IMR-90 (cell line): ENCODE measurements at regions of chr14 and their contacts with region 1.

Region 1: DNA sequence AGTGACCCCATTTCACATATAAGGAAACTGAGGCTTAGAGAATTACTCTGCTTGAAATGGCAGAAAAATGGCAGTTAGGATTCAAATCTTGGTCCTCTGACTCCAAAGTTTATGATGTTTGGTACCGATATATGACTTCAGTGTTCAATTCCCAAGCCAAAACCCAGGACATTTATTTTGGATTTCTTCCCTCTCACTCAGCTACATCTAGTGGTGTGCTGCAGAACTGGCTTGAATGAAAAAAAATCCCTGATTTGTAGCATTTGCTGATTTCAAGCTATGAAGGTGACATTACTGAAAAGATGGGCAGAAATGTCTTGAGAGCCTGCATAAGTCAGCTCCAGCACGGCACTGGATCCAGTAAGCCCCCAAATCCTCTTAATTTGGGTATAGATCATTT is 106.4 kb downstream of the EFCAB11 start:
- DNase-seq: peak; percentile 71
- ATAC-seq: 0 out of 2 replicates have a peak, but pooled peaks have one; percentile 3
- H3K4me3 ChIP-seq: no peak overlapping the region
- H3K27ac ChIP-seq: no peak overlapping the region
- H3K4me1 ChIP-seq: peaks cover 16% of the 10 kb centered on the region
- H3K27me3 ChIP-seq: no peaks in the 10 kb centered on the region
- CTCF ChIP-seq: peak; percentile 70
- POLR2A ChIP-seq: no peak
- RAD21 ChIP-seq: peak; percentile 85

Region 2: GRCh38 chr14:89540830-89541470 is 307.2 kb before region 1 on chr14:
- CTCF ChIA-PET with region 1: no interaction called
- POLR2A ChIA-PET with region 1: no interaction called
- dilution Hi-C with region 1: no loop called
- in situ Hi-C with region 1: no loop called
- intact Hi-C with region 1: loop called (anchors 5 kb)
- DNase-seq: peak; percentile 95
- ATAC-seq: peak; percentile 86
- H3K4me3 ChIP-seq: peak overlapping the region; percentile 16; the same call in 1 of the 2 replicates
- H3K27ac ChIP-seq: peak overlapping the region; percentile 89
- H3K4me1 ChIP-seq: peaks cover 13% of the 10 kb centered on the region
- H3K27me3 ChIP-seq: no peaks in the 10 kb centered on the region
- CTCF ChIP-seq: no peak
- POLR2A ChIP-seq: no peak
- RAD21 ChIP-seq: no peak; the same call in 1 of the 2 replicates

Region 3: GRCh38 chr14:89701211-89702043 is 146.7 kb before region 1 on chr14:
- CTCF ChIA-PET with region 1: no interaction called
- POLR2A ChIA-PET with region 1: no interaction called
- dilution Hi-C with region 1: no loop called
- in situ Hi-C with region 1: no loop called
- intact Hi-C with region 1: loop called (anchors 5 kb)
- DNase-seq: peak; percentile 62
- ATAC-seq: peak; percentile 94
- H3K4me3 ChIP-seq: peak overlapping the region; percentile 69
- H3K27ac ChIP-seq: peak overlapping the region; percentile 68
- H3K4me1 ChIP-seq: peaks cover 5% of the 10 kb centered on the region
- H3K27me3 ChIP-seq: no peaks in the 10 kb centered on the region
- CTCF ChIP-seq: no peak
- POLR2A ChIP-seq: no peak
- RAD21 ChIP-seq: peak; percentile 9; the same call in 1 of the 2 replicates

Region 4: DNA sequence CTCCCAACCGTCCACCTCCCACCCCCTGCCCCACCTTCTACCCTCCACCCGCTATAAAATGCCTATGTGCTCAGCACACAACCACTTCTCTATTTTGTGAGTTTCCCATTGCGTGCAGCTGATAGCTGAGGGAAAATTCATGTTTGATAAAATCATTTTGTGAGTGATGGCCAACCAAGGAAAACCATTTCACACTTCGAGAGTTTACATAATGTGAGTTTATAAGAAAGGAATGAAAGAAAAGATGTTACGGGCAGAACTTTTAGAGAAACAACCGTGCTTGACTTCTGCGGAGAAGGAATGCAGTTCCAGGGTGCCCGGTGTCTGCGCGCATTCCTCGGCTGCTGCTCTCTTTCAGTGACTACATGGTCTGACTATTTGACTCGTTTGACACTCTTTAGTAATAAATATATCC is 34.5 kb before region 1 on chr14:
- CTCF ChIA-PET with region 1: no interaction called
- POLR2A ChIA-PET with region 1: interaction called, 5 read pairs
- dilution Hi-C with region 1: no loop called
- in situ Hi-C with region 1: no loop called
- intact Hi-C with region 1: loop called (anchors 2 kb)
- DNase-seq: peak; percentile 96
- ATAC-seq: peak; percentile 96
- H3K4me3 ChIP-seq: no peak overlapping the region
- H3K27ac ChIP-seq: peak overlapping the region; percentile 34; the same call in 1 of the 2 replicates
- H3K4me1 ChIP-seq: peaks cover 8% of the 10 kb centered on the region
- H3K27me3 ChIP-seq: no peaks in the 10 kb centered on the region
- CTCF ChIP-seq: no peak
- POLR2A ChIP-seq: no peak
- RAD21 ChIP-seq: no peak; the same call in 1 of the 2 replicates

Region 5: DNA sequence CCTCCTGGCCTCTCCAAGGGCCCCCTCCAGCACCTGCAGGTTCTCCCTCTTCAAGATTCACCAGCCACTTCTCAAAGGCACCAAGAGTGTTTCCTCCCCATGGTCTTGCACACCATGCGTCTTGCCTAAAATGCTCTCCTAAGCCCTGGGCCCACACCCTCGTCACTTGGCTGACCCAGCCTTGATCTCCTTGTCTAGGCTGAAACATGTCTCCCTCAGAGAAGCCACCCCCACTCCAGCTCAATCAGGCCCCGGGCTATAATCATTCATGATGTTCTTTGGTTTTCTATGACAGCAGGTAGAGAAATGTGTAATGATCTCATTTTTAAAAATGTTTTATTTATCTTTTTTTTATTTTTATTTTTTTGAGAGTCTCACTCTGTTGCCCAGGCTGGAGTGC is 18.3 kb after region 1 on chr14:
- CTCF ChIA-PET with region 1: no interaction called
- POLR2A ChIA-PET with region 1: no interaction called
- dilution Hi-C with region 1: no loop called
- in situ Hi-C with region 1: no loop called
- intact Hi-C with region 1: no loop called
- DNase-seq: no peak
- ATAC-seq: no peak; the same call in 1 of the 2 replicates
- H3K4me3 ChIP-seq: no peak overlapping the region
- H3K27ac ChIP-seq: no peak overlapping the region
- H3K4me1 ChIP-seq: peaks cover 9% of the 10 kb centered on the region
- H3K27me3 ChIP-seq: no peaks in the 10 kb centered on the region
- CTCF ChIP-seq: no peak
- POLR2A ChIP-seq: no peak
- RAD21 ChIP-seq: no peak